ENCODE measurements at regions of chr12 and their contacts with region 1.

Region 1: DNA sequence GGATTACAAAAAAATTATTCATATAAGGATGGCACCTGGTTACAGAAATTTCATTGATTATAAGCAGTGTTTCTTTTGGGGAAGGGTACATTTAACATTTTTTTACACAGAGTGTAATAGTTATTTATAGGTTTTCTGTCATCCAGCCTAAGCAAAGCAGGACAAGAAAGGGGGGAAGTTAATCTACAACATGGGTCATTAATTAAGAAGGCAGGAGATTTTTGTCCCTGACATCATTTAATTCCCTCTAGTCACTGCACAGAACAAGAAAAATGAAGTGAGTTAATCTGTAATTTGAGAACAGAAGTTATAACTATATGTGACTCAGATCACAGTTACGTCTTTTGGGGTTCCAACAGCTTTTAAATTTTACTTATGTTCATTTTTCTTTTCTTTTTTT is 173.4 kb downstream of the PTPRO start:
- DNase-seq: no peak
- H3K4me3 ChIP-seq: no peak overlapping the region
- H3K27ac ChIP-seq: no peak overlapping the region
- H3K27me3 ChIP-seq: no peaks in the 10 kb centered on the region
- CTCF ChIP-seq: no peak

Region 2: DNA sequence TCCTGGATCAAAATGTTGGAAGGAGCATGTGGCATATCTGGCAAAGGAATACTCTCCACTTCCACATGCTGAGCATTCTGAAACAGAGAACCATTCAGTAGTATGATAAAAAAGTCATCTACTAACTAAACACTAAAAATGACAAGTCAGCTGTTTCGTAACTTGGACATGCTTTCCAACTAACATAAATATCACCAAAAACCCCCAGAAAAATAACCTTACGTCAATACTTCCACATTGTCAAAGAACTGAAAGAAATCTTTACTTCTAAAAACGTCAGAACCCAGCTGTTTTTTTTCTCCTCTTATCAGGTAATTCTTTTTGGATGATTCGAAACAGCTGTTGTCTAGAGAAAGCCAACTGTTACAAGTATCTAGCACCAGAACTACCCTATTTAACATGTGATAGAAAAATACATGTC is 700.7 kb before region 1 on chr12:
- CTCF ChIA-PET with region 1: no interaction called
- POLR2A ChIA-PET with region 1: interaction called, 10 read pairs
- DNase-seq: no peak
- H3K4me3 ChIP-seq: no peak overlapping the region
- H3K27ac ChIP-seq: no peak overlapping the region
- H3K27me3 ChIP-seq: no peaks in the 10 kb centered on the region
- CTCF ChIP-seq: no peak

Region 3: GRCh38 chr12:15677726-15678201 is 182.0 kb after region 1 on chr12:
- CTCF ChIA-PET with region 1: no interaction called
- POLR2A ChIA-PET with region 1: interaction called, 12 read pairs
- DNase-seq: no peak
- H3K4me3 ChIP-seq: no peak overlapping the region
- H3K27ac ChIP-seq: no peak overlapping the region
- H3K27me3 ChIP-seq: no peaks in the 10 kb centered on the region
- CTCF ChIP-seq: no peak